Activated CD4-positive, alpha-beta T cell treated with anti-CD3 and anti-CD28 coated beads for 36 hours (primary cell): ENCODE measurements at regions of chr1 and their contacts with region 1.

Region 1: GRCh38 chr1:244599937-244600350 is 53.0 kb upstream of the DESI2 start:
- DNase-seq: peak; percentile 74
- ATAC-seq: peak; percentile 96
- H3K4me3 Mint-ChIP-seq: peak overlapping the region; percentile 55
- H3K27ac Mint-ChIP-seq: peak overlapping the region; percentile 95
- H3K4me1 Mint-ChIP-seq: peaks cover 20% of the 10 kb centered on the region
- H3K27me3 Mint-ChIP-seq: peaks cover 4% of the 10 kb centered on the region

Region 2: DNA sequence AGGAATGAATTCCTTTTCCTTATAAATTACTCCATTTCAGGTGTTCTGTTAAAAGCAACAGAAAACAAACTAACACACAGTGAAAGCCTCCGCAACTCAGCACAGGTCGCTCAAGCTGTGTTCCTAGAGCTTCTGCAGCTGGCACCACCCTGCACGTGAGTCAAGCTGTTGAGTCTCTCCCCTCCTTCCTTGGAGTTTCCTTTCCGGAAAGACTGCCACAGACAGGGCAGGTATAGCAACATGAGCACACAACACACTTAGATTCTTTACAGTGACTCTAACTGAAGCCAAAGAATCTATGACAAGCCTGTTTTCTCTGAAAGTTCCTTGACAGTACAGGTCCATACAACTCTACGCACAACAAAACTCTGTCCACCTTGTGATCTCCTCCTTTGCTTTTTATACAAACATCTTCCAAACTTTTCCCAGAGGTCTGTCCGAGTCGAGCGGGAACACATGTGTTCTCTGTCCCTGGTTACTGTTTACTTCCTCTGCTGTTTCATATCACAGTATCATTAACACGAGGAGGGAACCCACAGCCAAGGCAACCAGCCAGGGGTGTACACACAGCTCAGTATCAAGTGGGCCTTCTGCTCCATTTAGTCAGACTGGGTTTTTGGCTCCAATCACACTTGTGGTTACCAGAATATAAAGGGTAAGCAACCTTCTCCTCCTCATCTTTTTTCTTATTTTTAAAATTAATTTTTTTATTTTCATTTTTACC is 14.3 kb after region 1 on chr1:
- CTCF ChIA-PET with region 1: interaction called, 23 read pairs
- POLR2A ChIA-PET with region 1: no interaction called
- intact Hi-C with region 1: no loop called
- DNase-seq: no peak
- ATAC-seq: no peak
- H3K4me3 Mint-ChIP-seq: no peak overlapping the region
- H3K27ac Mint-ChIP-seq: no peak overlapping the region
- H3K4me1 Mint-ChIP-seq: no peaks in the 10 kb centered on the region
- H3K27me3 Mint-ChIP-seq: no peaks in the 10 kb centered on the region

Region 3: DNA sequence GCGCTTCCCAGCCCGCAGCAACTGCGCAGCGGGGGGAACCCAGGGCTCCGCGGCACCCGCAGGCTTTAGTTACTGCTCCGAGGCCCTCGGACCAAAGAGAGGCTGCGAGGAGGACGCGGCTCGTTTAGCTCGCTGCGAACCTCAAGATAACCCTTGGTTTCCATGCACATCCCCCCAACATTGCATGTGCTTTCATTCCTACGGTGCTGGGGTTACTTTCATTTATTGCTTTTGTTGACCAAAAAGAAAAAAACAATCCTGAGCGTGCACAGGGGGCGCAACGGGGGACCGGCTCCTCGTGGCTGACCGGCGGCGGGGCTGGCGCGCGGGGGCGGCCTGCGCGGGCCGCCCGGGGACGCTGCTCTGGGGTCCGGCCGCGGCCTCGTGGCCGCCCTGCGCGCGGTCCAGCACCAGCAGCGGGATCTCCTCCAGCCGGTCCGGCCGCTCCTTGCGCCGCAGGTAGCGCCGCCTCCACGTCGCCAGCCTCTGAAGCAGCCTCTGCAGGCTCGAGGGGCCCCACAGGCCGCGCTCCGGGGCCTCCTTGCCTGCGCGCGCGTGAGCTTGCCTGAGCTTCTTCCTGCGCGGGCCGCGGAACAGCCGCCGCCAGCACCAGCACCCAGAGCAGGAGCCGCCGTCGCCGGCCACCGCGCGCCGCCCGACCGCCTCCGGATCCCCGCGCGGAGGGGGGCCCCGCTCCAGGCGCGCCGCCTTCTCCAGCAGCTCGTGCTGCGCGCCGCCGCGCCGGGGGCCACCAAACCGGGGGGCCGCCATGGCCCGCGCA is 130.4 kb after region 1 on chr1:
- CTCF ChIA-PET with region 1: interaction called, 6 read pairs
- POLR2A ChIA-PET with region 1: interaction called, 3 read pairs
- intact Hi-C with region 1: loop called in 1 of 2 experiments (anchors 5 kb)
- DNase-seq: peak; percentile 58
- ATAC-seq: peak; percentile 73
- H3K4me3 Mint-ChIP-seq: peak overlapping the region; percentile 74
- H3K27ac Mint-ChIP-seq: peak overlapping the region; percentile 67
- H3K4me1 Mint-ChIP-seq: peaks cover 10% of the 10 kb centered on the region
- H3K27me3 Mint-ChIP-seq: peaks cover 10% of the 10 kb centered on the region

Region 4: DNA sequence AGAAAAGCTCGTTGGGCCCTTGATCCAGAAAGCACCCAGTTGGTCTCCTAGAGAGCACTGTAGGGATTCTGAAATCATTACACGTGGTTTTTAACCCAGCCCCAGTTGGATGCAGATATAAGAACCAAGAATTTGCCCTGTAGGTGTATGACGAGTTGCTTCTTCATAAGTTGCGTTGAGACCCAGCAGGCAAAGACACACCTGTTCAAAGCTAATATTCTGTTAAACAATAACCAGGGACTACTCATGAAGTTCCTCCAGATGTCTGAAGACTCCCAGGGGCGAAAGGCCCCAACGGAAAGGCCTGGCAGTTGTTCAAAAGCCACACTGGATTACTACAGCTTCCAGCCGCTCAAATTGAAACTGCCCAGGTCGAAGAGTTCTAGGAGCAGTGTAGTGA is 353.0 kb after region 1 on chr1:
- CTCF ChIA-PET with region 1: no interaction called
- POLR2A ChIA-PET with region 1: no interaction called
- intact Hi-C with region 1: no loop called
- DNase-seq: no peak
- ATAC-seq: no peak
- H3K4me3 Mint-ChIP-seq: no peak overlapping the region
- H3K27ac Mint-ChIP-seq: no peak overlapping the region
- H3K4me1 Mint-ChIP-seq: no peaks in the 10 kb centered on the region
- H3K27me3 Mint-ChIP-seq: no peaks in the 10 kb centered on the region

Region 5: GRCh38 chr1:245045087-245045881 is 445.3 kb after region 1 on chr1:
- CTCF ChIA-PET with region 1: interaction called, 25 read pairs
- POLR2A ChIA-PET with region 1: no interaction called
- intact Hi-C with region 1: loop called (anchors 1 kb)
- DNase-seq: no peak
- ATAC-seq: no peak
- H3K4me3 Mint-ChIP-seq: no peak overlapping the region
- H3K27ac Mint-ChIP-seq: no peak overlapping the region
- H3K4me1 Mint-ChIP-seq: no peaks in the 10 kb centered on the region
- H3K27me3 Mint-ChIP-seq: no peaks in the 10 kb centered on the region